Mammary epithelial cell (primary cell): ENCODE measurements at regions of chr12 and their contacts with region 1.

Region 1: DNA sequence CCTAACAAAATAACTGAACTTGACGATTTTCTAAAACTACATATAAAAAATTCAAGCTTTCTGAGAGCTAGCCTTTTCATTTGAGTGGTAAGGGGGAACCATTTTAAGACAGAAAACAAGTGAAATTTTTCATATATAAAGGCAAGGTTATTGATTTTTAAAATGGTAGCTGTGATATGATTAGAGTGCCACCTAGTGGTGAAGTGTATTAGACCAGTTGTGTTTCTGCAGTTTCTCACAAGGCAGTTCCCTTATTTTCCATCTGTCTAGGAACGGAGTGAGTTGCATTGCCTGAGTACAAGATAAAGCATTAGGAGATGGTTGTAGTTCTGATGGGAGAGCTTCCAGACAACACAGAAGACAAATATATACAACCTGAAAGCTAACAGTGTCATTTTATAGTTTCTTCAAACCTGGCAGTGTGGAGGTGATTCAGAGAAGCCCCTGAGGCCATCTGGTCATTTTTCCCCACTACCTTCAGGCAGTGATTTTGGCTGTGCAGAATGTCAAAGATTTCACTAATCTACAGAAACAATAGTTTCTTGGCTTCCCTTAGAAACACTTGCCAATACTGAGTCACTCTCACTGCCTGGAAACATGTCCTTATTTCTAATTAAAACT is 180.8 kb downstream of the C12orf50 start:
- DNase-seq: peak; percentile 48
- H3K4me3 ChIP-seq: no peak overlapping the region
- H3K27ac ChIP-seq: no peak overlapping the region
- H3K4me1 ChIP-seq: peaks cover 4% of the 10 kb centered on the region
- H3K27me3 ChIP-seq: no peaks in the 10 kb centered on the region
- CTCF ChIP-seq: peak; percentile 75 to 76

Region 2: DNA sequence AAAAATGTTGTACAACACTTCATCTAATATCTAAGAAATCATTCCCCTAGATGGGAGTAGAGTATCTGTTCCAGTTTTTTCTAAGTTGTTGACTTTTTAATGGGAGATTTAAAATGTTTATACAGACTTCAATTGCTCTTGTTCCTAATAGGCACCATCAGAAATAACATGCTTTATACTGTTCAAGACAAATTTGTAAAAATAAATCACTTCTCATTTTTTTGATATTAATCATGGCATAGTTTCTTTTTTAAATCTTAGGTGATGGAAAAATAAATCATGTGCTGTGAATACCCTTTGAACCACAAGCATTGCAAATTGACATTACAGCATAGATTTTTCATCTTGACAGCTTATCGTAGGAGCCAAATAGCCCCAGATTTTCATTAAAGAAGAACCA is 1118.6 kb before region 1 on chr12:
- CTCF ChIA-PET with region 1: no interaction called
- dilution Hi-C with region 1: no loop called
- in situ Hi-C with region 1: no loop called
- intact Hi-C with region 1: loop called (anchors 5 kb)
- DNase-seq: no peak
- H3K4me3 ChIP-seq: no peak overlapping the region
- H3K27ac ChIP-seq: no peak overlapping the region
- H3K4me1 ChIP-seq: peaks cover 8% of the 10 kb centered on the region
- H3K27me3 ChIP-seq: no peaks in the 10 kb centered on the region
- CTCF ChIP-seq: no peak

Region 3: GRCh38 chr12:87054226-87054625 is 794.1 kb before region 1 on chr12:
- CTCF ChIA-PET with region 1: no interaction called
- dilution Hi-C with region 1: no loop called
- in situ Hi-C with region 1: no loop called
- intact Hi-C with region 1: loop called (anchors 2 kb)
- DNase-seq: no peak
- H3K4me3 ChIP-seq: no peak overlapping the region
- H3K27ac ChIP-seq: no peak overlapping the region
- H3K4me1 ChIP-seq: no peaks in the 10 kb centered on the region
- H3K27me3 ChIP-seq: no peaks in the 10 kb centered on the region
- CTCF ChIP-seq: no peak

Region 4: GRCh38 chr12:87274594-87275245 is 573.6 kb before region 1 on chr12:
- CTCF ChIA-PET with region 1: no interaction called
- dilution Hi-C with region 1: no loop called
- in situ Hi-C with region 1: no loop called
- intact Hi-C with region 1: loop called (anchors 5 kb)
- DNase-seq: peak; percentile 7
- H3K4me3 ChIP-seq: no peak overlapping the region
- H3K27ac ChIP-seq: no peak overlapping the region
- H3K4me1 ChIP-seq: no peaks in the 10 kb centered on the region
- H3K27me3 ChIP-seq: no peaks in the 10 kb centered on the region
- CTCF ChIP-seq: peak; percentile 43 to 52

Region 5: DNA sequence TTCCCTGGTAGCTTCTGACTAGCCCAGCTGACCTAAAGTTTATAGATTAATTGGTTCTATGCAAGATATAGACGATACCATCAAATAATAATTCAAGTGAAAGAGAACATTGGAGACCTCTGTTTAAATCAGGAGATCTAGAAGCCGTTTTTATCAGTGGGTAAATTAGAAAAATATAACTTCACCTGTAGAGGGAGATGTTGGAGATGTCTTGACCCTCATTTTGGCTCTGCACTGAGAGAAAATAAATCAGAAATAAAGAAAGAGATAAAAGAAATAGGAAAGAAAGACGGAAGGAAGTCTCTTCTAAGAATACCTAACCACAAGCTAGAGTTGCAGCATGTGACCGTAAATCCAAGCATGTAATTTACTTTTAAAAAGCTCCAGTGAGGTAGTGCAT is 503.7 kb before region 1 on chr12:
- CTCF ChIA-PET with region 1: no interaction called
- dilution Hi-C with region 1: no loop called
- in situ Hi-C with region 1: no loop called
- intact Hi-C with region 1: loop called (anchors 1 kb)
- DNase-seq: no peak
- H3K4me3 ChIP-seq: no peak overlapping the region
- H3K27ac ChIP-seq: no peak overlapping the region
- H3K4me1 ChIP-seq: no peaks in the 10 kb centered on the region
- H3K27me3 ChIP-seq: no peaks in the 10 kb centered on the region
- CTCF ChIP-seq: peak; percentile 21 to 52

Region 6: DNA sequence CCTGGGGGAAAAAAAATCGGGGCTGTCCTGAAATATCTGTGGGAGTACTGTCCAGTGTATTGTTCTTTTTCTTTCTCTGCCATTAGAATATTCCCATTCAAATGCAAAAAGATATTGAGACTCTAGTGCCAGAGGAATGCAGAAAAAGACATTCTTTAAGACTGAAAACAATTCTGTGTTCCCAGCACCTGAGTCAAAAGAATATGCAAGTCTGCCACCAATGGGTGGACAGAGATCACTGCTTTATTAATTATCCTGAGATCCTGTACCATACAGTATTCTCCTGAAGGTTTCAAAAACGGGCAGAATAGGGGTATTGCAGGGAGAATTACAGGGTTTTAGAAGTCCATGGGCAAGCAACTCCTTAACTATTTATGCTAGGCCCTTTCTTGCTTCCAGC is 181.0 kb before region 1 on chr12:
- CTCF ChIA-PET with region 1: no interaction called
- dilution Hi-C with region 1: no loop called
- in situ Hi-C with region 1: no loop called
- intact Hi-C with region 1: loop called (anchors 1 kb)
- DNase-seq: peak; percentile 31
- H3K4me3 ChIP-seq: no peak overlapping the region
- H3K27ac ChIP-seq: no peak overlapping the region
- H3K4me1 ChIP-seq: no peaks in the 10 kb centered on the region
- H3K27me3 ChIP-seq: no peaks in the 10 kb centered on the region
- CTCF ChIP-seq: peak; percentile 66 to 68

Region 7: GRCh38 chr12:88225776-88226175 is 377.4 kb after region 1 on chr12:
- CTCF ChIA-PET with region 1: no interaction called
- dilution Hi-C with region 1: no loop called
- in situ Hi-C with region 1: no loop called
- intact Hi-C with region 1: no loop called
- DNase-seq: no peak
- H3K4me3 ChIP-seq: no peak overlapping the region
- H3K27ac ChIP-seq: no peak overlapping the region
- H3K4me1 ChIP-seq: no peaks in the 10 kb centered on the region
- H3K27me3 ChIP-seq: no peaks in the 10 kb centered on the region
- CTCF ChIP-seq: no peak